Head of caudate nucleus (tissue), 42 donors: ENCODE measurements at regions of chr3 and their contacts with region 1.

Region 1: DNA sequence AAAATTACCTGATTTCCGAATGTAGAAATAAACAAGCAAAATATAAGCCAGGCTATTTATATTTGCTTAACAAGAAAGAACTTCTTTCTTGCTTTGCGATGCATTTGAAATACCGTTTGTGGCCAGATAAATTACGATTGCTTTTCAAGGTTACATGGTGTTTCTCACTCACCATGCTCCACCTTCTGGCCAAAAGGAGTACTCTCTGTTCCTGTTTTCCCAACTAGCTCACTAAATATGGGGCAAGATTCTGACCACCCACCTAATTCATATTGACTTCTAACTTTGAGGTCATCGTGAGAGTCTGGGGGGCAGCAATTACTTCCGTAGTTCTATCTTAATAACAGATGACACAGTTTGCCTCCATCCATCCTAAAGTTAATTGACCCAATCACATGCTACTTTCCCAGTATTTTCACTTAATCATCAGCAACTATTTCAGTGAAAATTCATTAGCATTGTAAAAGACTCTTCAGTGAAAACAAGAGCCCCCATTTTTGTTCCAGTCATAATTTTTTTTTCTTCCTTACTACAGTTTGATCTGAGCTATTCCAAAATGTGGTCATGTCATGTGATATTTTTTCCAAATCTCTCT is 25.9 kb downstream of the ACP3 start:
- DNase-seq: peak in 26 of 42 donors; percentile 5 to 80 (median 48)

Region 2: GRCh38 chr3:132255041-132255746 is 87.9 kb before region 1 on chr3:
- intact Hi-C with region 1: loop called (anchors 2 kb)
- DNase-seq: peak in 38 of 42 donors; percentile 1 to 78 (median 32)